ENCODE measurements at regions of chr17 and their contacts with region 1.

Region 1: DNA sequence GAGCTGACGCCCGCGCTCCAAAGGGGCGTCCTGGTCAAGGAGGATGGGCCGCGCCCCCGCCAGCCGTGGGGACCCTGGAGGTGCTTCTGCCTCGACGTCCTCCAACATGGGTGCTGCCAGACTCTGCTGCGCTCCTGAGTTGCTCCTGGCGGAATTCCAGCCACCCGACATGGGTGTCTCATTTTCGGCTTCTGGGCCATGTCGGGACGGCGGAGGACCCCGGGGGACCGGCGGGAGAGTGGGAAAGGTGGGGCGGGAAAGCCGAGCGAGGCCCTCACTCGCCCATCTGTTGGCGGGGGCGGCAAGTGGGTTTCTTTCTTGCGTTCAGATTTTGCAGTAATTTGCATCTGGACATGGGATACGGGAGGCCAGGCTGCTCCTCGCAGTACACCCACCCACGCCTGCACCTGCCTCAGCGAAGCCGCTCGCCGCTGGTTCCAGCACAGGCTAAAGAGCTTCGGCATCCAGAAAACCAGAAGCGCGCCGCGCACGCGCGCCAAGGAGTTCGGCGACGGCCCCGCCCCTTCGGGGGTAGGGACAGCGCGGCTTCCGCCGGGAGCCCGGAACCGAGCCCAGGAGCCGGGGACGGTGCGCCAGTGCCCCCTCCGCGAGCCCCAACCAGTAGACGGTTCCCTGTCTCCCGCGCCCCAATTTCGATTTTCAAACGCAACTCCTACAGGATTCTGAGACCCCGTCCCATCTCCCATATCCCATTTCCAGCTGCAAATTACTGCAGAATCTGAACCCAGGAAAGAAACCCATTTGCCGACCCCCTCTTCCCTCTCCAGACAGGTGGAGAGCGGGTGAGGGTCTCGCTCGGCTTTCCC is at the start of gene ARMC7:
- DNase-seq: peak; percentile 83
- H3K4me3 ChIP-seq: peak within 1 kb of the TSS; percentile 60 to 69
- H3K27ac ChIP-seq: peak within 1 kb of the TSS; percentile 75
- H3K4me1 ChIP-seq: no peaks in the 10 kb centered on the region
- H3K27me3 ChIP-seq: no peaks in the 10 kb centered on the region
- CTCF ChIP-seq: peak in 1 of 4 experiments; percentile 24
- POLR2A ChIP-seq: peak; percentile 80
- total RNA-seq, gene ARMC7: 13.6 to 15.1 TPM

Region 2: GRCh38 chr17:75013092-75013559 is 96.5 kb before region 1 on chr17:
- intact Hi-C with region 1: no loop called
- DNase-seq: no peak
- H3K4me3 ChIP-seq: peak overlapping the region; percentile 57 to 62
- H3K27ac ChIP-seq: peak overlapping the region; percentile 90 to 92
- H3K4me1 ChIP-seq: peaks cover 5% of the 10 kb centered on the region
- H3K27me3 ChIP-seq: no peaks in the 10 kb centered on the region
- CTCF ChIP-seq: no peak
- POLR2A ChIP-seq: no peak

Region 3: DNA sequence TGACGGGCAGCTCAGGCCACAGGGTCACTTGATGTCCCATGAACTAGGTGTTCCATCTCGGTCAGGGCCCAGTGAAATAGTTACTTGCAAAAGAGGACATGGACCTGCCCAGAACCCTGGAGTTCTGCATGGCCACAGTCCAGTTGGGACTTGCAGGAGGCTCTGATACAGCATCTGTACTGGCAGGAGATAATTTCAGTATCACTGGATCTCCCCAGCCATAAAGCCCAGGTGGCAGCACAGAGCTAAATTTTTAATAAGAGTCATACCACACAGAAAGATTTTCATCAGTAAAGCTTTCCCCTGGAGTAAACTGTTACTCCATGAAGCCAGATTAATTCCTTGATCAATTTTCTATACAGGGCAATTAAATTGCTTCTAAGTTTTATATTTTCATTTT is 39.8 kb before region 1 on chr17:
- intact Hi-C with region 1: loop called (anchors 5 kb)
- DNase-seq: peak; percentile 31
- H3K4me3 ChIP-seq: no peak overlapping the region
- H3K27ac ChIP-seq: no peak overlapping the region
- H3K4me1 ChIP-seq: no peaks in the 10 kb centered on the region
- H3K27me3 ChIP-seq: no peaks in the 10 kb centered on the region
- CTCF ChIP-seq: peak in 2 of 4 experiments; percentile 39 to 59
- POLR2A ChIP-seq: no peak

Region 4: DNA sequence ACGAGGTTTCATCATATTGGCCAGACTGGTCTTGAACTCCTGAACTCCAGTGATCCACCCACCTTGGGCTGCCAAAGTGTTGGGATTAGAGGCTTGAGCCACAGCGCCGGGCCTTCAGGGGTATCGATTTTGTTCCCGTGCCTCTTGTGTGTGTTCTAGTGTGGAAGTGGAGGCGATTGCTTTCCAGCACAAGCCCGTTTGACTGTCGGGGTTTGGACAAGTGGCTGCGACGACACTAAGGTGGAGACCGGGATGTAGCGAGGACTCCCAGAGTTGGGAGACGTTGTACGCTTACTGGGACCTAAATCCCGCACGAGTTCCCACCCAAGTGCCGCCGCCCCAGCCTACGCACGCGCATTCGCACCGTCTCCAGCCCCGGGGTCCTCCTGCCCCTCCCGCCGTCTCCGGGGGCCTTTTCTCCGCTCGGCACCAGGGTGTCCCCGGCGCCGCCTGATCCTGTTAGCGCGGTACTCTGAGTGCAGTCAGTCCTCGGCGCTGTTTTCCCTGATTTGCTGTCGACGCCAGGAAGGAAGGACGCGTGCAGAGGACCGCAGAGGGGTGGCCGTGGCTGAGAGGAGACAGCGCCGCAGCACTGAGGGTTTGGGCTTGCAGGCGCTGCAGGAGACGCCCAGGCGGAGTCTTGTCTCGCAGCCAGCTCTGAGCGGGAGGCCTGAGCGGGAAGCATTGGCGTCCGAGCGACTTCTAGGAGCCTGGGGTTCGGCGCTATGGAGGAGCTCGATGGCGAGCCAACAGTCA is 95.6 kb after region 1 on chr17 and contains the start of gene NUP85:
- intact Hi-C with region 1: loop called (anchors 2 kb)
- DNase-seq: peak; percentile 88
- H3K4me3 ChIP-seq: peak within 1 kb of the TSS; percentile 74 to 85
- H3K27ac ChIP-seq: peak within 1 kb of the TSS; percentile 85 to 93
- H3K4me1 ChIP-seq: no peaks in the 10 kb centered on the region
- H3K27me3 ChIP-seq: no peaks in the 10 kb centered on the region
- CTCF ChIP-seq: peak in 2 of 4 experiments; percentile 9 to 16
- POLR2A ChIP-seq: peak; percentile 45
- total RNA-seq, gene NUP85: 41.0 to 46.7 TPM